Ovary (tissue), 10 donors: ENCODE measurements at regions of chr7 and their contacts with region 1.

Region 1: GRCh38 chr7:70870349-70870748 is 261.6 kb upstream of the GALNT17 start:
- DNase-seq: no peak
- H3K4me3 ChIP-seq: no peak overlapping the region
- H3K27ac ChIP-seq: no peak overlapping the region
- H3K4me1 ChIP-seq: no peaks in the 10 kb centered on the region
- H3K27me3 ChIP-seq: no peaks in the 10 kb centered on the region
- CTCF ChIP-seq: no peak
- EP300 ChIP-seq: no peak
- POLR2A ChIP-seq: no peak

Region 2: DNA sequence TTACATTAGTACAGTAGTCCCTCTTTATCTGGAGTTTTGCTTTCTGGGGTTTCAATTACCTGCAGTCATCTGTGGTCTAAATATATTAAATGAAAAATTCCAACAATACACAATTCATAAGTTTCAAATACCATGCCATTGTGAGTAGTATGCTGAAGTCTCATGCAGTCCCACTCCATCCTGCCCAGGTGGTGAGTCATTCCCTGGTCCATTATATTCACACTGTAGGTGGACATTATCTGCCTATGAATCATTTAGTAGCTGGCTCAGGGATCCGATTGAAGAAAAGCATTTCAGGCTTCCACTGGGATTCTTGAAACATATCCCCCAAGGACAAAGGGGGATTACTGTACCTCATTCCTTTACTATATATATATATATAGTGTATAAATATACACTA is 36.6 kb before region 1 on chr7:
- intact Hi-C with region 1: no loop called
- DNase-seq: no peak
- H3K4me3 ChIP-seq: no peak overlapping the region
- H3K27ac ChIP-seq: no peak overlapping the region
- H3K4me1 ChIP-seq: no peaks in the 10 kb centered on the region
- H3K27me3 ChIP-seq: no peaks in the 10 kb centered on the region
- CTCF ChIP-seq: no peak
- EP300 ChIP-seq: no peak
- POLR2A ChIP-seq: no peak

Region 3: GRCh38 chr7:71106226-71106625 is 235.9 kb after region 1 on chr7:
- intact Hi-C with region 1: loop called in 1 of 4 experiments (anchors 10 kb)
- DNase-seq: no peak
- H3K4me3 ChIP-seq: no peak overlapping the region
- H3K27ac ChIP-seq: no peak overlapping the region
- H3K4me1 ChIP-seq: no peaks in the 10 kb centered on the region
- H3K27me3 ChIP-seq: no peaks in the 10 kb centered on the region
- CTCF ChIP-seq: no peak
- EP300 ChIP-seq: no peak
- POLR2A ChIP-seq: no peak